ENCODE measurements at regions of chr18 and their contacts with region 1.

Region 1: DNA sequence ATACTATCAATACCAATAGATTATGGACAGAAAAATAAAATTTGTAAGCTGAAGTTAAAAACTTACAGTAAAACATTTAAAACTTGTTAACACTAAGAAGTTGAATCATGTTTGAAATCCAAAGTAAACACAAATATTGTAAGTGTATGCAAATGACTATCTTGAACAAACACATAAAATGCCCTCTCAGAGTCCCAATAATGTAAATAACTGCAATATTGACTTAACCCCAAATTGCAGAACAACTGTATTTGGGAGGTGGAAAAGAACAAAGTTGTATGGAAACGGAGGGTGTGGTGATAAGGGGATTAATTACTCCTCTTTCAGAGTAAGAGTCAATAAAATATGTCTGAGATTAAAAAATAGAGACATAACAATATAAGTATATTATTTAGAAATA is 140.0 kb upstream of the NOL4 start:
- DNase-seq: no peak
- H3K4me3 ChIP-seq: no peak overlapping the region
- H3K27ac ChIP-seq: no peak overlapping the region
- H3K4me1 ChIP-seq: no peaks in the 10 kb centered on the region
- H3K27me3 ChIP-seq: no peaks in the 10 kb centered on the region
- CTCF ChIP-seq: no peak
- EP300 ChIP-seq: no peak
- POLR2A ChIP-seq: no peak

Region 2: DNA sequence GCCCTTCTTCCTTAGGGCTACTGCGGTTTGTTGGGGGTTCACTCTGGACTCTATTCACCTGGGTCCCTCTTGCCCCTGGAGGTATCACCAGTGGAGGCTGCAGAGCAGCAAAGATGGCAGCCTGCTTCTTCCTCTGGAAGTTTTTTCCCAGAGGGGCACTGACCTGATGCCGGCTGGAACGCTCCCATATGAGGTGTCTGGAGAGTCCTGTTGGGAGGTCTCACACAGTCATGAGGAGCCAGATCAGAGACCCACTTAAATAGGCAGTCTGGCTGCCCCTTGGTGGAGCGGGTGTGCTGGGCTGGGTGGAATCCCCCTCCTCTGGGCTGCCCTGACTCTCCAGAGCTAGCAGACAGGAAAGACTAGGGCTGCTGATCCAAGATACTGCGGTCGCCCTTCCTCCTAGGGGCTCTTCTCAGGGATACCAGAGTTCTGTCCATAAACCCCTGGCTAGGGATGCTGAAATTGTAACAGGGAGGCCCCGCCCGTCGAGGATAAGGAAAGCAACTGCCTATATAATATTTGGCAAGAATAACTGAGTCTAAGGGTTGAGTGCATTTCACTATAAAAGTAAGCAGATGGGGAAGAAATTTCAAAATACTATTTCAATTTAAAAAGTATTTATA is 280.7 kb before region 1 on chr18:
- intact Hi-C with region 1: no loop called
- DNase-seq: no peak
- H3K4me3 ChIP-seq: no peak overlapping the region
- H3K27ac ChIP-seq: no peak overlapping the region
- H3K4me1 ChIP-seq: no peaks in the 10 kb centered on the region
- H3K27me3 ChIP-seq: no peaks in the 10 kb centered on the region
- CTCF ChIP-seq: no peak
- EP300 ChIP-seq: no peak
- POLR2A ChIP-seq: no peak

Region 3: GRCh38 chr18:34297287-34297686 is 67.4 kb before region 1 on chr18:
- intact Hi-C with region 1: no loop called
- DNase-seq: no peak
- H3K4me3 ChIP-seq: no peak overlapping the region
- H3K27ac ChIP-seq: no peak overlapping the region
- H3K4me1 ChIP-seq: no peaks in the 10 kb centered on the region
- H3K27me3 ChIP-seq: no peaks in the 10 kb centered on the region
- CTCF ChIP-seq: no peak
- EP300 ChIP-seq: no peak
- POLR2A ChIP-seq: no peak

Region 4: GRCh38 chr18:34322365-34323289 is 42.1 kb before region 1 on chr18:
- intact Hi-C with region 1: loop called in 1 of 4 experiments (anchors 2 kb)
- DNase-seq: peak in 2 of 5 donors; percentile 23 to 41
- H3K4me3 ChIP-seq: no peak overlapping the region
- H3K27ac ChIP-seq: no peak overlapping the region
- H3K4me1 ChIP-seq: no peaks in the 10 kb centered on the region
- H3K27me3 ChIP-seq: no peaks in the 10 kb centered on the region
- CTCF ChIP-seq: no peak
- EP300 ChIP-seq: no peak
- POLR2A ChIP-seq: no peak